ENCODE measurements at regions of chr1 and their contacts with region 1.

Region 1: DNA sequence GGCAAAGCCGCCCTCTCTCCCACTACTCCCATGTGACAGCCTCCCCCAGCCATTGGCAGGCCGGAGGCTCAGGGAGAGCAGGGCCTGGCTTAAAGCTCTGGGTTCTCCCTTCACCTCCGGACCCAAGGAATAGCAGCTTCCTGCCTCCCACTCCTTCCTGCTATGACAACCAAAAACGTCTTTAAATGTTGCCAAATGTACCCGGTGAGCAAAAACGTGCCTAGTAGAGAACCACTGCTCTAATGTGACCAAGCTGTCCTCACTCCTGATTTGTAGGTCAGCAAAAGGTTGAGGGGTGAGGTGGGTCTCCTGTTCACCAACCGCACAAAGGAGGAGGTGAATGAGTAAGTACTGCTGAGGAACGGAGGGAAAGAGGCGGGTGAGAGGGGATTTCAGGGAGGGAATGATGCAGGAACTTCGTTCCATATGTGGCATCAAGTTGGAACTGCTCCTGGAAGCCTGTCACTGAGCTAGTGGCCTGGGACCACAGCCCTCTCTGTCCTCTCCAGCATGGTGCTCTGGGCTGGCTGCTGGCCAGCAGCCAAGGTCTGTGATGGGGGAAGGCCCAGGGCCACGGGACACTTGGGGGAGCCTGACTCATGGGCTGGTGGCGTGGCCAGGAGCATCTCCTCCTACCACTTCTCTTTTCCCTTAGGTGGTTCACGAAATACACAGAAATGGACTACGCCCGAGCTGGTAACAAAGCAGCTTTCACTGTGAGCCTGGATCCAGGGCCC is 5.7 kb downstream of the MRTO4 start:
- DNase-seq: no peak
- H3K4me3 ChIP-seq: no peak overlapping the region
- CTCF ChIP-seq: no peak

Region 2: DNA sequence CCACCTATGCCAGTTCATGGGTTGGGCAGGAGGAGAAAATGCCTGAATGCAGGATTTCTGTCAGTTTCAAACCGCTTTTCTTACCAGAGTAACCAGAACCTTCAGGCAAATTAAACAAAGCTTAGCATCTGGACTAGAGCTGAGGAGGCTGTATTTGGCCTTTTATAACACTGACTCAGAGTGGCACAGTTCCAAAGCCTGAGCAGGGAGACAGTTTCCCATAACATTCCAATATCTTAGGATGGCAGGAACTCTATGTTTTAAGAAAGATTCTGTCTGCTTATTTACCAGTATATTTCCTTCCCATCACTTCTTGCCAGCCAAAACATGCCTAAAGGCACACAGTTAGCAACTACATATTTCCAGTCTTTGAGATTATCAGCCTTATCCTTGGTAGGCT is 94.1 kb before region 1 on chr1:
- in situ Hi-C with region 1: loop called (anchors 5 kb)
- DNase-seq: peak; percentile 64
- H3K4me3 ChIP-seq: no peak overlapping the region
- CTCF ChIP-seq: no peak

Region 3: GRCh38 chr1:19177811-19178210 is 79.5 kb before region 1 on chr1:
- in situ Hi-C with region 1: no loop called
- DNase-seq: no peak
- H3K4me3 ChIP-seq: no peak overlapping the region
- CTCF ChIP-seq: no peak

Region 4: GRCh38 chr1:19353596-19353995 is 96.2 kb after region 1 on chr1:
- in situ Hi-C with region 1: no loop called
- DNase-seq: no peak
- H3K4me3 ChIP-seq: no peak overlapping the region
- CTCF ChIP-seq: no peak

Measured in astrocyte of the cerebellum (primary cell).